ENCODE measurements at regions of chr15 and their contacts with region 1.

Region 1: DNA sequence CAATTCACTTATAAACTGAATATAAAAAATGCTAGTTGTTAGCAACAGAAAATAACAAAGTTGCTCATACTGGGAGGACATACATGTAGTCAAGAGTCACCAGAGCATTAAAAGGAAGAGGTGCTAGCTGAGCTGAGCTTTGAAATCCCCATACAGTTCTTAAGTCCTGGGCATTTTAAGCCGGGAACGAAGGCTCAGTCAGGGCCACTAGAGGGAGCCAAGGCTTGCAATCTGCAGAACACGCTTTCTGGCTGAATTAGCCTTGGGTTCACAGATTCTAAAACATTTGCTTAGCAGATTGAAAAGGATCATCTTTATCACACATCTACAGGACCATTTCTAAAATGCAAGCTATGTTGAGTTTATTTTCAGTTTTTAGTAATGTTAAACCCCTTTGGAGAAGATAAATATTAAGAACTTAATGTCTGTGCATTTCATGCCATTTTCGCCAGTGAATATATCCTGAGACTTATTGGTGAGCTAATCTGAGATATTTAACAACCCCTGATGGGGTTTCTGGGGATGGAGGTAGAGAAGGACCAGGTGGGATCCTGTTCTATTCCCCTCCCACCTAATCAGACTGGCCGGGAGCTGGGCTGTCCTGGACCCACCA is 26.3 kb upstream of the MNS1 start:
- DNase-seq: peak in 1 of 2 donors; percentile 38
- ATAC-seq: peak in 3 of 4 donors; percentile 46 to 73 (median 72)
- H3K4me3 ChIP-seq: no peak overlapping the region
- H3K27ac ChIP-seq: no peak overlapping the region
- H3K4me1 ChIP-seq: no peaks in the 10 kb centered on the region
- H3K27me3 ChIP-seq: no peaks in the 10 kb centered on the region
- CTCF ChIP-seq: peak; percentile 77

Region 2: DNA sequence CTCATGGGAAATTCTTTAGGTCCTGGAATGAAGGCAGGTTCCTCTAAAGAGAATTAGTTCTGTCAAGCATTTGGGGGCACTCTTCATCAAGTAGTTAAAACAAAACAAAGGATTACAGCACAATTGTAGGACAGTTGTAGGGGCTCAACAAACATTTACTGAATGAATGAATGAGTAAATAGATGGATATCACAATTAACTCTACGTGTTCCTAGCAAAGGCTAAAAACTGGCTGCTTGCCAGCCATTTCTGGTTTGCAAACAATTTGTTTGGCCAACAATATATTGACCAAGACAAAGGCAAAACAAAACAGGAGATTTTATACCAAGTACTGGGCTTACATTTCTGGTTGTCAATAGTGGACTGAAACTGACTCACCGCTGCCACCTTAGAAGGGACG is 125.3 kb after region 1 on chr15:
- intact Hi-C with region 1: loop called in 1 of 2 experiments (anchors 10 kb)
- DNase-seq: no peak
- ATAC-seq: no peak
- H3K4me3 ChIP-seq: no peak overlapping the region
- H3K27ac ChIP-seq: no peak overlapping the region
- H3K4me1 ChIP-seq: no peaks in the 10 kb centered on the region
- H3K27me3 ChIP-seq: no peaks in the 10 kb centered on the region
- CTCF ChIP-seq: no peak

Region 3: DNA sequence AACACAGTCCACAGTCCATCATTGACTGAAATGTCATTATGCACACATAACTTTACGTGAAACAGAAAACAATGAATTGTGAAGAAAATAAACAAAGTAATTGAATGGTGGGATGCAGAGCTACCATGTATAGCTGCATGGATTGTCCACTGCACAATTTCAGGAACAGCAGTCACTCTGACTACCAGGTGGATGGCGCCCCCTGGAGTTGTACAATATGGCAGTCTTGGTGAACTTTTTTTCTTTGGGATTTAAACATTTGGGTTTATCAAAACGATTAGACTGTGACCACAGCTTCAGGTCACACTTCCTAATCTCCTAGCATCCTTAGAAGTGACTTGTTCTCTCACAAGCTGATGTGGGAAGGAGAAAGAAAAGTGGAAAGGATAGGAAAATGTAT is 378.4 kb after region 1 on chr15:
- intact Hi-C with region 1: loop called (anchors 2 to 5 kb)
- DNase-seq: peak; percentile 49 to 64
- ATAC-seq: peak in 3 of 4 donors; percentile 65 to 82 (median 73)
- H3K4me3 ChIP-seq: no peak overlapping the region
- H3K27ac ChIP-seq: no peak overlapping the region
- H3K4me1 ChIP-seq: peaks cover 19% of the 10 kb centered on the region
- H3K27me3 ChIP-seq: no peaks in the 10 kb centered on the region
- CTCF ChIP-seq: peak; percentile 71

Region 4: GRCh38 chr15:57213862-57214261 is 722.6 kb after region 1 on chr15:
- intact Hi-C with region 1: loop called in 1 of 2 experiments (anchors 10 kb)
- DNase-seq: no peak
- ATAC-seq: peak in 3 of 4 donors; percentile 47 to 77 (median 59)
- H3K4me3 ChIP-seq: no peak overlapping the region
- H3K27ac ChIP-seq: no peak overlapping the region
- H3K4me1 ChIP-seq: peaks cover 24% of the 10 kb centered on the region
- H3K27me3 ChIP-seq: no peaks in the 10 kb centered on the region
- CTCF ChIP-seq: peak; percentile 54

Region 5: GRCh38 chr15:57527382-57528091 is 1036.3 kb after region 1 on chr15:
- intact Hi-C with region 1: loop called in 1 of 2 experiments (anchors 10 kb)
- DNase-seq: no peak
- ATAC-seq: peak; percentile 70 to 88 (median 75)
- H3K4me3 ChIP-seq: no peak overlapping the region
- H3K27ac ChIP-seq: no peak overlapping the region
- H3K4me1 ChIP-seq: no peaks in the 10 kb centered on the region
- H3K27me3 ChIP-seq: no peaks in the 10 kb centered on the region
- CTCF ChIP-seq: peak; percentile 71

Measured in psoas muscle (tissue), 8 donors.